Thyroid gland (tissue), 4 donors: ENCODE measurements at regions of chr19 and their contacts with region 1.

Region 1: GRCh38 chr19:38849860-38850435 is at the start of gene HNRNPL:
- DNase-seq: no peak
- H3K4me3 ChIP-seq: peak within 1 kb of the TSS; percentile 62 to 97 (median 93)
- H3K27ac ChIP-seq: peak within 1 kb of the TSS; percentile 99 to 100 (median 100)
- H3K4me1 ChIP-seq: peaks cover 26 to 27% of the 10 kb centered on the region in 2 donors
- H3K27me3 ChIP-seq: no peaks in the 10 kb centered on the region
- CTCF ChIP-seq: peak in 3 of 6 experiments; percentile 11 to 48 (median 34)
- POLR2A ChIP-seq: peak; percentile 92 to 96
- total RNA-seq, gene HNRNPL: 181 to 247 (median 232) TPM

Region 2: DNA sequence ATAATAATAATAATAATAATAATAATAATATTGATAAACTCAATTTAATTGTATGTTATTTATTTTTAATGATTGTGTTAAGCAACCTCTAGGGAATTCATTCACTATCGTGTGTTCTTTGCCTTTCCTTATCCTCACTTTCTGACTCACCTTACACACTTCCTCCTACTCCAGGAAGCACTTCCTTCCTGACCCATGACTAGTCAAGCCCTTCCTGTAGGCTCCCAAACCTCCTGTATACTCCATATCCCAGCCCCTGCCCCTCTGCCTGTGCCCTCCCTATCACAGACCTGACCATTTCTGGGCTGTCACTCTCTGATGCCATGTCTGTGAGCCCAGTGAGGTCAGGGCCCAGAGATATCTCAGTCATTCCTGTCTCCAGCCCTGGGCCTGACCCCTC is 44.8 kb before region 1 on chr19:
- intact Hi-C with region 1: no loop called
- DNase-seq: no peak
- H3K4me3 ChIP-seq: no peak overlapping the region
- H3K27ac ChIP-seq: no peak overlapping the region
- H3K4me1 ChIP-seq: peaks cover 4 to 11% of the 10 kb centered on the region in 2 donors
- H3K27me3 ChIP-seq: no peaks in the 10 kb centered on the region
- CTCF ChIP-seq: no peak
- POLR2A ChIP-seq: no peak

Region 3: DNA sequence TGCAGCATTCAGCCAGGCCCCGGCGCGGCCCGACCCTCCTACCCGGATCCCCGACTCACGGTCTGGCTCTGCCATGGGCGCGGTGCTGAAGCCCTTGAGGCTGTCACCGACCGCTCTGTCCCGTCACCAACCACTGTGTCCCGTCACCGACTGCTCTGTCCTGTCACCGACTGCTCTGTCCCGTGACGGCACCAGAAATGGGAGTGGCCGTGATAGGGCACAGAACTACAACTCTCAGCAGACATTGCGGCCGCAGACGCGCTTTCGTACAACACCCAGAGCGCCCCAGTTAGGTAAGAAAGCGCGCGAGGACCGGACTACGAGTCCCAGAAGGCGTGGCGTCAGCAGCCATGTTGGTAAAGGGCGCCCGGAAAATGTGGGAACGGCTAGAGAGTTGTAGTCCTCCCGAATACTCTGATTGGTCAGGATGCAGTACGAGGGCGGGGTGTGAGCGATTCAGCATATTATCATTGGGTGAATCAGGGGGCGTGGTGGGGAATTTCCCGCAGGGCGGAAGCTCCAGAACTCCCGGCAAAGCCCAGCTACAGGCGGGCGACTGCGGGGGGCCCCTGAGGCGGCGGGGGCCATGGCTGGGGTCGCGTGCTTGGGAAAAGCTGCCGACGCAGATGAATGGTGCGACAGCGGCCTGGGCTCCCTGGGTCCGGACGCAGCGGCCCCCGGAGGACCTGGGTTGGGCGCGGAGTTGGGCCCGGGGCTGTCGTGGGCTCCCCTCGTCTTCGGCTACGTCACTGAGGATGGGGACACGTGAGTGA is 49.7 kb after region 1 on chr19 and contains the starts of genes NFKBIB and SIRT2:
- intact Hi-C with region 1: loop called (anchors 5 kb)
- DNase-seq: peak; percentile 100
- H3K4me3 ChIP-seq: peak within 1 kb of the TSS; percentile 86 to 92 (median 89)
- H3K27ac ChIP-seq: peak within 1 kb of the TSS; percentile 66 to 87 (median 81)
- H3K4me1 ChIP-seq: peaks cover 17 to 22% of the 10 kb centered on the region in 2 donors
- H3K27me3 ChIP-seq: no peaks in the 10 kb centered on the region
- CTCF ChIP-seq: peak in 1 of 6 experiments; percentile 17
- POLR2A ChIP-seq: peak; percentile 24 to 88
- total RNA-seq, gene NFKBIB: 18.6 to 23.7 (median 21.2) TPM
- total RNA-seq, gene SIRT2: 69.6 to 107 (median 90.7) TPM